Activated CD4-positive, alpha-beta T cell treated with anti-CD3 and anti-CD28 coated beads, Interleukin-2, amount 10 ng/mL, durations not matched to agents 7 days and 5 days (primary cell): ENCODE measurements at regions of chr10 and their contacts with region 1.

Region 1: GRCh38 chr10:30639946-30640786 is 10.6 kb upstream of the LYZL2 start:
- DNase-seq: peak; percentile 27
- H3K4me3 Mint-ChIP-seq: no peak overlapping the region
- H3K27ac Mint-ChIP-seq: no peak overlapping the region
- H3K4me1 Mint-ChIP-seq: peaks cover 1% of the 10 kb centered on the region
- H3K27me3 Mint-ChIP-seq: peaks cover 20% of the 10 kb centered on the region

Region 2: DNA sequence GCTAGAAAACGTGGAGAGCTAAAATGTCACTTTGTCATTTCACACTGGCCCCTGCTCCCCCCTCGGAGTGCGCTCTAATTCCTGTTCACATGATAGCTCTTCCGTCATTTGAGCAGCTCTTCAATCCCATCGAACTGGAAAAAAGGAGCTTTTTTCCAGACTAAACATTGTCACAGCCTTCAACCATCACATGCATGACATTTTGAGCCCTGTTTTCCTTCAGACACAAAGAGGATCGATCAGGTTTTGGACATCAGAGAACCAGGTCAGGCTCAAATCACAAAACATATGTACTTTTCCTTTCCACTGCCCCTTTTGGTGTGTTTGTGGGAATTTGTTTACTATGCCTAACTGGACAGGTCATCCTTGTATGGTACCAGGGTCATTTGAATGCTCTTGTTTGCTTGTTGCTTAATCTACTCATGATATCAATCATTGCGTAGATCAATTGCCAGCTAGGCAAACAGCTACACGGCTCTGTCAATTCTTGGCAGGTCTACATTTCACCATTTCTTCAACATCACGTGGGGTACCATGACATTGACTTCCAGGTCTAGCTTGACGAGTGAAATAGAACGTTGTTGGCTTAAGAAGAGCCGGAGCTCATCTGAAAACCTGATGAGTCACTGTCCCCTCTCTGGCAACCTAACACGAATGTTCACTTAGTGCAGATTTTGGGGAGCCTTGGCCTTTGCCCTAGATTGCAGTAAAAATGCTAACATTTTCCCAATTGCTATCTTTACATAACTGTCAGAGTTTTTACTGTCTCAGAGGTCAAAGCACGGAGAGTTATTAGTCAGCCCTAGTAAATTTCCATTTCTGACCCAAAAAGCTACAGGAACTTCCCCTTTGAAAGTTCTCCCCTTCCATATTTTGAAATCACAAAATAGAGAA is 97.9 kb before region 1 on chr10:
- CTCF ChIA-PET with region 1: no interaction called
- POLR2A ChIA-PET with region 1: no interaction called
- DNase-seq: no peak
- H3K4me3 Mint-ChIP-seq: no peak overlapping the region
- H3K27ac Mint-ChIP-seq: no peak overlapping the region
- H3K4me1 Mint-ChIP-seq: peaks cover 4% of the 10 kb centered on the region
- H3K27me3 Mint-ChIP-seq: peaks cover 4% of the 10 kb centered on the region

Region 3: GRCh38 chr10:30583778-30584415 is 56.3 kb before region 1 on chr10:
- CTCF ChIA-PET with region 1: no interaction called
- POLR2A ChIA-PET with region 1: no interaction called
- DNase-seq: peak; percentile 13
- H3K4me3 Mint-ChIP-seq: peak overlapping the region; percentile 42
- H3K27ac Mint-ChIP-seq: no peak overlapping the region
- H3K4me1 Mint-ChIP-seq: peaks cover 6% of the 10 kb centered on the region
- H3K27me3 Mint-ChIP-seq: peaks cover 4% of the 10 kb centered on the region

Region 4: GRCh38 chr10:30671026-30671616 is 31.0 kb after region 1 on chr10:
- CTCF ChIA-PET with region 1: interaction called, 13 read pairs
- POLR2A ChIA-PET with region 1: interaction called, 3 read pairs
- DNase-seq: peak; percentile 47
- H3K4me3 Mint-ChIP-seq: peak overlapping the region; percentile 52
- H3K27ac Mint-ChIP-seq: no peak overlapping the region
- H3K4me1 Mint-ChIP-seq: peaks cover 13% of the 10 kb centered on the region
- H3K27me3 Mint-ChIP-seq: peaks cover 9% of the 10 kb centered on the region